ENCODE measurements at regions of chr7 and their contacts with region 1.

Region 1: DNA sequence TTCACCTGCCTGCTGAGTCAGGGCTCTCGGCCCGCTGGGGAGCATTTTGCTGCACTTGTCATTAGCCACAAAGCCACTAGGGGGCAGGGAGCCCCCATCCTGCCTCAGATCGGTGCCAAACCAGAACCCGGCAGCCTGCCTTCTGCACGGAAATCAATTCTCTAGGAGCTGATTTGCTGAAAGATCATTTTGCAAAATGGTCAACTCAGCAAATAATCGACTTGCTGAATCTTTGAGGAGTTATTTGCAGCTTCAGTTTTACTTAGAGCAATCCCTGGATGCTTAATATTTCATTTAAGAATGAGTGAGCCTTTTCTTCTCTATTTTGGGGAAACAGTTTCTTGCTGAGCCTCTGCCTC is 1.7 kb upstream of the GIMAP8 start:
- DNase-seq: peak; percentile 87
- H3K4me3 ChIP-seq: no peak overlapping the region
- H3K27ac ChIP-seq: no peak overlapping the region
- H3K4me1 ChIP-seq: peaks cover 33% of the 10 kb centered on the region
- H3K27me3 ChIP-seq: no peaks in the 10 kb centered on the region
- CTCF ChIP-seq: peak; percentile 93 to 96
- POLR2A ChIP-seq: no peak

Region 2: DNA sequence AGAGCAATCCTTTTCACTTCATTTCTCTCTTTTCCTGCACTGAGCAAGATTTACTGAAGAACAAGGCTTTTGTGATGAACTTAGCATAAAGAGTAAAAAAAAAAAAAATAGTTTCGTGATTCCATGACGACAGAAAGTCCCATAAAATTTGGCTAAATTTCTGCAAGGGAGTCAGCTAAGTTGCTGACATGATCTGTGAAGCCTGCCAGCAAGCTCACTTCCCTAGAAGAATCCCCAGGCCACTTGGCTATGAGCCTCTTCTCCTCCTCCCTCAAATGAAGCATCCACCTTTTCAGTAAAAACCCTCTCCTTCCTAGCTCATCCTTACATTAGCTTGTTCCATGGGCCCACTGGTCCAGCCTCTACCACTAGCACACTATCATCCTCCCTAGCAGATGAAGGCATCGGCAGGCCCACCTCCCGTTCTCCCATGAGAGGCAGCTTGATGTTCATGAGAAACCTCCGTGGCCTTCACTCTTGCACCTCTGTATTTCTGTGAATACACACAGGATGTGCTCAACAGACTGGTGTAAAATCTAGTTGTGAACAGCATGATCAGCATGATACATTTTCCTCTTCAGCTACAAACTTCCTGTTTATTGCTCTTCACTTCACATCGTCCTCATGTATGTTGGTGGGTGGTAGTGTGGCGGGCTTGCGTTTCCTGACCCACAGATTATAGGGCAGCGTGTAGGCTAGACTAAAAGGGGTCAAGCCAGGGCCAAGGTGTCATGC is 32.6 kb after region 1 on chr7:
- CTCF ChIA-PET with region 1: interaction called, 19 read pairs
- POLR2A ChIA-PET with region 1: no interaction called
- dilution Hi-C with region 1: no loop called
- intact Hi-C with region 1: loop called (anchors 1 kb)
- DNase-seq: no peak
- H3K4me3 ChIP-seq: no peak overlapping the region
- H3K27ac ChIP-seq: no peak overlapping the region
- H3K4me1 ChIP-seq: peaks cover 15% of the 10 kb centered on the region
- H3K27me3 ChIP-seq: no peaks in the 10 kb centered on the region
- CTCF ChIP-seq: no peak
- POLR2A ChIP-seq: no peak

Region 3: GRCh38 chr7:150586785-150587152 is 138.0 kb after region 1 on chr7:
- CTCF ChIA-PET with region 1: interaction called, 15 read pairs
- POLR2A ChIA-PET with region 1: interaction called, 10 read pairs
- dilution Hi-C with region 1: no loop called
- intact Hi-C with region 1: loop called (anchors 1 kb)
- DNase-seq: peak; percentile 96
- H3K4me3 ChIP-seq: peak overlapping the region in 1 of 3 experiments; percentile 24
- H3K27ac ChIP-seq: peak overlapping the region; percentile 93
- H3K4me1 ChIP-seq: peaks cover 34% of the 10 kb centered on the region
- H3K27me3 ChIP-seq: no peaks in the 10 kb centered on the region
- CTCF ChIP-seq: no peak
- POLR2A ChIP-seq: no peak

Region 4: DNA sequence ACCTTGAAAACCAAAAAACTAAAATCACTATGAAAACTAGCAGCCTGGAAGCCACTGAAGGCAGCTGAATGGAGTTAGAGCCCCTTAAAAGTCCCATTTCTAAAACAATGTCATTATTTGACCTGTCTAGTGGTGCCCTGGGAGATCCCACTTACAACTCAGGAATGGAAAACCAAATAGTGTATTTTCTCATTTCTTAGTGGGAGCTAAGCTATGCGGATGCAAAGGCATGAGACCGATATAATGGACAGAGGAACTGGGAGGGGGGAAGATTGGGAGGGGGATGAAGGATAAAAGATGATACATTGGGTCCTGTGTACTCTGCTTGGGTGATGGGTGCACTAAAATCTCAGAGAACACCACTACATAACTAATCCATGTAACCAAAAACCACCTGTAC is 226.9 kb after region 1 on chr7:
- CTCF ChIA-PET with region 1: no interaction called
- POLR2A ChIA-PET with region 1: no interaction called
- dilution Hi-C with region 1: no loop called
- intact Hi-C with region 1: loop called (anchors 2 kb)
- DNase-seq: peak; percentile 43
- H3K4me3 ChIP-seq: no peak overlapping the region
- H3K27ac ChIP-seq: peak overlapping the region; percentile 48
- H3K4me1 ChIP-seq: peaks cover 19% of the 10 kb centered on the region
- H3K27me3 ChIP-seq: no peaks in the 10 kb centered on the region
- CTCF ChIP-seq: no peak
- POLR2A ChIP-seq: no peak

Region 5: GRCh38 chr7:150722431-150722931 is 273.7 kb after region 1 on chr7:
- CTCF ChIA-PET with region 1: interaction called, 20 read pairs
- POLR2A ChIA-PET with region 1: no interaction called
- dilution Hi-C with region 1: no loop called
- intact Hi-C with region 1: loop called (anchors 1 kb)
- DNase-seq: peak; percentile 72
- H3K4me3 ChIP-seq: no peak overlapping the region
- H3K27ac ChIP-seq: no peak overlapping the region
- H3K4me1 ChIP-seq: peaks cover 9% of the 10 kb centered on the region
- H3K27me3 ChIP-seq: no peaks in the 10 kb centered on the region
- CTCF ChIP-seq: no peak
- POLR2A ChIP-seq: peak; percentile 39

Region 6: DNA sequence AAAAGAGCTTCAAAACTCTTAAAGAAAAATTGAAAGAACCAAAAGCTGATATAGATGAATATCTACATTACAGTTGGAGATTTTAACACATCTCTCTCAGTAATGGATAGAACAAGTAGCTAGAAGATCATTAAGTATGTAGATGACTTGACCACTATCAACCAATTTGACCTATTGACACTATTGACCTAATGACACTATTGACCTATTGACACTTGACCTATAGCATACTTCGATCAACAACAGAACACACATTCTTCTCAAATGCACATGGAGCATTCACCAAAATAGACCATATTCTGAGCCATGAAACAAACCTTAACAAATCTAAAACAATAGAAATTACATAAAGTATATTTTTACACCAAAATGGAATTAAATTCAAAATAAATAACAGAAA is 310.7 kb after region 1 on chr7:
- CTCF ChIA-PET with region 1: interaction called, 120 read pairs
- POLR2A ChIA-PET with region 1: interaction called, 3 read pairs
- dilution Hi-C with region 1: no loop called
- intact Hi-C with region 1: loop called (anchors 1 kb)
- DNase-seq: no peak
- H3K4me3 ChIP-seq: no peak overlapping the region
- H3K27ac ChIP-seq: no peak overlapping the region
- H3K4me1 ChIP-seq: peaks cover 19% of the 10 kb centered on the region
- H3K27me3 ChIP-seq: no peaks in the 10 kb centered on the region
- CTCF ChIP-seq: no peak
- POLR2A ChIP-seq: no peak

Region 7: DNA sequence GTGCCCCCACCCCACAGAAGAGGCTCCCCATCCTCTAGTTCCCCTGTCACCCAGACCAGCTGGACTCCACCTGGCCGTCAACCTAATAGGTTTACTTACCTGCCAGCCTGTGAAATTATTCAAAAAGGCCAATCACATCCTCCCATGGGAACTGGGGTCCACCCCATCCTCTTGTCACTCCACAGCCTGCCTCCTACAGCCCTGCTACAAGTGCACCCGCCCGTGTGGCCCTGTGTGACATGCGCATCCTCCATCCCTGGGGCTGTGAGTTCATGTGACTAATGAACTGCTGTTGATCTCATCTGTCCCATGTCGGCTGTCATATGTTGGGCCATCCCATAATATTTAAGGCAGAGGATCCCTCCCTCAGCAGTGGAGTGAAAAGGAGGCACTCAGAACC is 443.0 kb after region 1 on chr7:
- CTCF ChIA-PET with region 1: no interaction called
- POLR2A ChIA-PET with region 1: no interaction called
- dilution Hi-C with region 1: no loop called
- intact Hi-C with region 1: no loop called
- DNase-seq: no peak
- H3K4me3 ChIP-seq: no peak overlapping the region
- H3K27ac ChIP-seq: no peak overlapping the region
- H3K4me1 ChIP-seq: no peaks in the 10 kb centered on the region
- H3K27me3 ChIP-seq: peaks cover 3 to 6% of the 10 kb centered on the region in 2 experiments
- CTCF ChIP-seq: no peak
- POLR2A ChIP-seq: no peak

Region 8: GRCh38 chr7:150988230-150989226 is 539.8 kb after region 1 on chr7:
- CTCF ChIA-PET with region 1: interaction called, 3 read pairs
- POLR2A ChIA-PET with region 1: no interaction called
- dilution Hi-C with region 1: no loop called
- intact Hi-C with region 1: loop called (anchors 2 kb)
- DNase-seq: peak; percentile 87
- H3K4me3 ChIP-seq: no peak overlapping the region
- H3K27ac ChIP-seq: peak overlapping the region; percentile 52
- H3K4me1 ChIP-seq: peaks cover 26% of the 10 kb centered on the region
- H3K27me3 ChIP-seq: peaks cover 0 to 1% of the 10 kb centered on the region in 2 experiments
- CTCF ChIP-seq: peak; percentile 93 to 96
- POLR2A ChIP-seq: peak; percentile 47